IMR-90 (cell line): ENCODE measurements at regions of chr6 and their contacts with region 1.

Region 1: DNA sequence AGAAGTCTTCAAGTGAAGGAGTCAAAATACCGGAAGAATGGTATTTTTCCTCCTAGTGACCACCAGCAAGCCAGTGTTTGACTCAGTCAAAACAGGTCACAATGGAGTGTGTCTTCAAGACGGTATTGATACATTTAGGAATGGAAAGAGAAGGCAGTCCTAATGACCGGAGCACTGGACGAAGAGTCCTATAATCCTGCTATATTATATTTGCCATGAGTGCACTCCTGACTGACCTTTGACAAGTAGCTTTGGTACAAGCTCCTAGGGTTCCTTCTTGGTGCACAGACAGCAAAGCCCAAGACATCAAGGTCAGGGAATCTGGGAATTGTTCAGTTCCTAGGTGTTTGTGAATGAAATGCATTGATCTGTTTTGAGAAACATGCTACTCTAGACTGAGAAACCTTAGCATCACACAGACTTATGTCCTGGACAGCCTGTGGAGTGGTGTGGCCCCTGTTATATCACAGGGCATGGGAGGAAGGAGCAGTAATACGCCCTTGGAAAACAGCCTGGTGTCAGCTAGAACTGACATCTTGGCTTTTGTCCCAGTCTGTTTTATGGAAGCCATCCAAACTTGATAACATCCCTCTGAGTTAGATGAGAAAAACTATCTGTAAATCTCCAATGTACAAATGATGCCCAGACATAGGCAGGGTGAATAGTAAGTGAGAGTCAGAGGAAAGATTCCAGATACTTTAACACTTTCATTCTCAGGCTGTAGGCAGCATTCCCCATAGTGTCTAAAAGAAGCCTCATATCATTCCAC is 18.5 kb downstream of the NOX3 start:
- DNase-seq: peak; percentile 42
- ATAC-seq: peak; percentile 67
- H3K4me3 ChIP-seq: no peak overlapping the region
- H3K27ac ChIP-seq: no peak overlapping the region
- H3K4me1 ChIP-seq: peaks cover 1% of the 10 kb centered on the region
- H3K27me3 ChIP-seq: no peaks in the 10 kb centered on the region
- CTCF ChIP-seq: no peak
- POLR2A ChIP-seq: no peak
- RAD21 ChIP-seq: no peak

Region 2: DNA sequence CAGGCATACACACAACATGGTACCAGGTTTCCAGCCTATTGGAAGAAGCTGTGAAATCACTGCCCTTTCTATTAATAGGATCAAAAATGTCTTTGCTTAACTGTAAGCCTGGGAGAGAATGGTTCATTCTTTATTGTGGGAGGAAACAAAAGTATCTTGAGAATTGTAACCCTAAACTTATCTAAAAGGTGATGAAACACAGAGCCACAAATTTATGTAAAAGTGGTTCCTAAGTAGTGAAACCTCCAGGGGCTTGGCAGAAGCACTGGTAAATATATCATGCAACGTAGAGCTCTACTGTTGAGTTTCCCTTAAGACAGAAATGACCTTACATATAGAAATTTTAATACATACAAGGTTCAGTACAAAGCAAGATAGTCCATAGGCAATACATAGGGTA is 35.7 kb after region 1 on chr6:
- CTCF ChIA-PET with region 1: no interaction called
- POLR2A ChIA-PET with region 1: no interaction called
- dilution Hi-C with region 1: no loop called
- in situ Hi-C with region 1: no loop called
- intact Hi-C with region 1: loop called (anchors 5 kb)
- DNase-seq: peak; percentile 64
- ATAC-seq: no peak; the same call in 1 of the 2 replicates
- H3K4me3 ChIP-seq: no peak overlapping the region
- H3K27ac ChIP-seq: no peak overlapping the region
- H3K4me1 ChIP-seq: no peaks in the 10 kb centered on the region
- H3K27me3 ChIP-seq: no peaks in the 10 kb centered on the region
- CTCF ChIP-seq: no peak
- POLR2A ChIP-seq: no peak
- RAD21 ChIP-seq: no peak